Activated CD4-positive, alpha-beta T cell treated with anti-CD3 and anti-CD28 coated beads for 36 hours (primary cell): ENCODE measurements at regions of chr13 and their contacts with region 1.

Region 1: GRCh38 chr13:39037880-39038568 is at the starts of genes NHLRC3 and PROSER1:
- DNase-seq: peak; percentile 87
- ATAC-seq: peak; percentile 74
- H3K4me3 Mint-ChIP-seq: peak within 1 kb of the TSS; percentile 98
- H3K27ac Mint-ChIP-seq: peak within 1 kb of the TSS; percentile 97
- H3K4me1 Mint-ChIP-seq: peaks cover 45% of the 10 kb centered on the region
- H3K27me3 Mint-ChIP-seq: no peaks in the 10 kb centered on the region
- total RNA-seq, gene NHLRC3: 9.0 to 12.3 TPM
- total RNA-seq, gene PROSER1: 64.8 to 75.4 TPM

Region 2: DNA sequence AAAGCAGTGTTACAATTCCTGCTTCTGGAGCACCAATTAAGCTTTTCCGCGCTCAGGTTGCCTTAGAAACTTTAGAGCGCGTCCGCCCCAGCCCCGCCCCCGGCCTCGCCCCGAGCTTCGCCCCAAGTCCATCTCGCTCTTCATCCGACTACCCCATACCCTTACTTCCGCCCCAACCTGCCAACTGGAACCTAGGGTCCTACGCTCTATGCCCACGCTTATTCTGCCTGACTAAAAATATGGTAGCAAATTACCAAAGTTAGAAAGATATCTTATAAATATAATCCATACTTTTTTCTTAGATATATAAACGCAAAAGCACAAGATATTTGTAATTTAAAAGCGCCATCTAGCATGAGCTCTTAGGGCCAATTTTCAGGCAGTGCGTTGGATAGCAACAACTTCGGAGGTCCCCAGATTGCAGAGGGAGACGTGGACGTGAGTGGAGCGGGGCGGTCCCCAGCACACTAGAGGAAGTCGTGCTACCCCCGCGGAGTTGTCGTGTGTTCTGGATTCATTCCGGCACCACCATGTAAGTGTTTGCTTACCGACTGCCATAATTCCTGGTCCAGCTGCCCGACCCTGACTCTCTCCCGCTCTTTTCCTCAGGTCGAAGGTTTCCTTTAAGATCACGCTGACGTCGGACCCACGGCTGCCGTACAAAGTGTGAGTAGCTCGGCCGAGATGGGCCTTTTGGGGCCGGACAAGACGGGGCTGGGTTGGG is 688.5 kb before region 1 on chr13 and contains the start of gene UFM1:
- CTCF ChIA-PET with region 1: no interaction called
- POLR2A ChIA-PET with region 1: no interaction called
- intact Hi-C with region 1: loop called in 1 of 2 experiments (anchors 1 kb)
- DNase-seq: peak; percentile 92
- ATAC-seq: peak; percentile 93
- H3K4me3 Mint-ChIP-seq: peak within 1 kb of the TSS; percentile 98
- H3K27ac Mint-ChIP-seq: peak within 1 kb of the TSS; percentile 99
- H3K4me1 Mint-ChIP-seq: peaks cover 35% of the 10 kb centered on the region
- H3K27me3 Mint-ChIP-seq: no peaks in the 10 kb centered on the region
- total RNA-seq, gene UFM1: 36.7 to 44.8 TPM

Region 3: DNA sequence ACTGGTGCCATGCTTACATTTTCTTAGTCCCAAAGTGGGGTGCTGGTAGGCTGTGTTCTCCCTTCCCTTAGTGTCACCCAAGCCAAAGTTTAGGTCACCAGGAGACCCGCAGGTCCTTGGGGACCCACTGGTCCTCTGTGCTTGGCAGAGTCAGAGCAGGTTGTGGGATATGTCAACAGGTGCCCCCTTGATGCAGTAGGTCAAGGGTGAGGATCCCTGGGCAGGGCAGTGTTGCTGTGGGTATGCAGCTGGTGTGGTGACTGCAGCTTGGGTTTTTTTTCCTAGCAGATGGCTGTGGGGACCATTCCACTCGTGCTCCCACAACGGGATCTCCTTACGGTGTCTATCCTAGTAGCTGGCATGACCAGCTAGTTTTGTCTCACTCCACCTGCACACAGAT is 24.0 kb after region 1 on chr13:
- CTCF ChIA-PET with region 1: no interaction called
- POLR2A ChIA-PET with region 1: no interaction called
- intact Hi-C with region 1: no loop called
- DNase-seq: no peak
- ATAC-seq: no peak
- H3K4me3 Mint-ChIP-seq: no peak overlapping the region
- H3K27ac Mint-ChIP-seq: no peak overlapping the region
- H3K4me1 Mint-ChIP-seq: peaks cover 8% of the 10 kb centered on the region
- H3K27me3 Mint-ChIP-seq: no peaks in the 10 kb centered on the region

Region 4: DNA sequence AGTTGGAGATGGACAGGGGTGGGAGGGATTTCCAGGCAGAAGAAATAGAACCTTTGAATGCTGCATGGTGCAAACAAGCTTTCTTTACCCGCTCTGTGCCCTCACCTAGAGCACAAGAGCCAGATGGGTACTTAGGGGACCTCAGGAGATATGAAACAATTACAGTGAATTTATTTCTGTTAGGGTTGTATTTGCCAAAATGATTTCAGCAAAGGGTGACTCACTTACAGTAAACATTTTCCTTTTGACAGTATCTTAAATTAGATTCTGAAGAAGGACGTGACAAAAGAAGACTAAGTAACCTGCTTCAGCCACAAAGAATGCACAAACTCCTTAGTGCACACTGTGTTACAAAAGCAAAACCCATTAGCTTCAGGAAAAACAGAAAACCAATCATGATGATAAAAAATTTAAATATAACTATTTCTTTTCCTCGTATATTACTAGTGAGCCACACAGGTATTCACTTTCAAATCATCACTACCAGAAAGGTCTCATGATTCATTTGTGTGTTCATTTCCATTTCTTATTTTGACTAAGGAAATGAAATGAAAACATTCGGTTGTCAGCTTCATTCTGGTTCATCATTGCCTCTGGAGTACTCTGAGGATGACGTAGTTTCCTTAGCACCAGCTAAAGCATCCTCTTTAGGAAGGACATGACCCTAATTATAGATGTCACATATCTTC is 159.1 kb after region 1 on chr13:
- CTCF ChIA-PET with region 1: interaction called, 5 read pairs
- POLR2A ChIA-PET with region 1: no interaction called
- intact Hi-C with region 1: loop called in 1 of 2 experiments (anchors 1 kb)
- DNase-seq: no peak
- ATAC-seq: peak; percentile 89
- H3K4me3 Mint-ChIP-seq: no peak overlapping the region
- H3K27ac Mint-ChIP-seq: peak overlapping the region; percentile 52
- H3K4me1 Mint-ChIP-seq: peaks cover 13% of the 10 kb centered on the region
- H3K27me3 Mint-ChIP-seq: peaks cover 13% of the 10 kb centered on the region

Region 5: DNA sequence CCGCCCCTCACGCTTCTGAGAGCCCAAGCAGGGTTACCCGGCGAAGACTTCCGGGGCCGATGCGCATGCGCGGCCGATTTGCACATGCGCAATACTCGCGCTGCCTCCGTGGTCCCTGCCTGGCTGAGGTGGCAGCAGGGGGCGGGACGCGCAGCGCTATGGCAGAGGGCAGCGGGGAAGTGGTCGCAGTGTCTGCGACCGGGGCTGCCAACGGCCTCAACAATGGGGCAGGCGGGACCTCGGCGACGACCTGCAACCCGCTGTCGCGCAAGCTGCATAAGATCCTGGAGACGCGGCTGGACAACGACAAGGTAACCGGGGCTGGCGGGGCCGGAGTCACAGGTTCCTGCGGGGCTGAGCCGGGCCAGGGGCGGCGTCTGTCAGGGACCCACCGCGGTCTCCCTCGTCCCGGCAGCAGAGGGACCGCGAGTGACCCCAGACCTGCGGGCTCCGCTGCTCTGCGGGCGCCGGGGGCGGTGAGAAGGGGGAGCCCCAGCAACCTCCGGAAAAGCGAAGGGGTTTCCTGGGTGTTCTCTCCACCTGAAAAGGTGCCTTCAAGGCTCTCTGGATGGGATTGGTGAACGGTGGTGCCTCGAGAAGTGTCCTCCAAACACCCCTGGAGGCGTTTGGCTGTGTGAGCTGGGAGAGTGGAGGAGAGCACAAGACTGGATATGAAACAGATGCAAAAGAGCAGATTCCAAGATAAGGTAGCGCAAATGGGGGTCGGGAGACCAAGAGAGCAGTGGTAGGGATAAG is 617.7 kb after region 1 on chr13 and contains the start of gene COG6:
- CTCF ChIA-PET with region 1: no interaction called
- POLR2A ChIA-PET with region 1: no interaction called
- intact Hi-C with region 1: loop called in 1 of 2 experiments (anchors 2 kb)
- DNase-seq: peak; percentile 94
- ATAC-seq: peak; percentile 94
- H3K4me3 Mint-ChIP-seq: peak within 1 kb of the TSS; percentile 98
- H3K27ac Mint-ChIP-seq: peak within 1 kb of the TSS; percentile 93
- H3K4me1 Mint-ChIP-seq: peaks cover 21% of the 10 kb centered on the region
- H3K27me3 Mint-ChIP-seq: no peaks in the 10 kb centered on the region
- total RNA-seq, gene COG6: 27.7 to 28.9 TPM